ENCODE measurements at regions of chr6 and their contacts with region 1.

Region 1: GRCh38 chr6:90080876-90081481 is 186.7 kb downstream of the GJA10 start:
- DNase-seq: no peak
- ATAC-seq: peak; percentile 61
- H3K4me3 Mint-ChIP-seq: peak overlapping the region; percentile 84
- H3K27ac Mint-ChIP-seq: peak overlapping the region; percentile 86
- H3K4me1 Mint-ChIP-seq: peaks cover 96% of the 10 kb centered on the region
- H3K27me3 Mint-ChIP-seq: no peaks in the 10 kb centered on the region
- CTCF ChIP-seq: no peak

Region 2: GRCh38 chr6:89819336-89820130 is 261.4 kb before region 1 on chr6 and contains the start of gene MDN1:
- CTCF ChIA-PET with region 1: no interaction called
- POLR2A ChIA-PET with region 1: no interaction called
- intact Hi-C with region 1: loop called (anchors 10 kb)
- DNase-seq: peak; percentile 76
- ATAC-seq: peak; percentile 94
- H3K4me3 Mint-ChIP-seq: peak within 1 kb of the TSS; percentile 95
- H3K27ac Mint-ChIP-seq: peak within 1 kb of the TSS; percentile 95
- H3K4me1 Mint-ChIP-seq: peaks cover 33% of the 10 kb centered on the region
- H3K27me3 Mint-ChIP-seq: no peaks in the 10 kb centered on the region
- CTCF ChIP-seq: no peak
- total RNA-seq, gene MDN1: 59.8 and 65.4 TPM in 2 replicates

Region 3: GRCh38 chr6:90044833-90045381 is 36.1 kb before region 1 on chr6:
- CTCF ChIA-PET with region 1: no interaction called
- POLR2A ChIA-PET with region 1: no interaction called
- intact Hi-C with region 1: no loop called
- DNase-seq: no peak
- ATAC-seq: no peak
- H3K4me3 Mint-ChIP-seq: no peak overlapping the region
- H3K27ac Mint-ChIP-seq: peak overlapping the region; percentile 55
- H3K4me1 Mint-ChIP-seq: peaks cover 17% of the 10 kb centered on the region
- H3K27me3 Mint-ChIP-seq: no peaks in the 10 kb centered on the region
- CTCF ChIP-seq: no peak

Region 4: DNA sequence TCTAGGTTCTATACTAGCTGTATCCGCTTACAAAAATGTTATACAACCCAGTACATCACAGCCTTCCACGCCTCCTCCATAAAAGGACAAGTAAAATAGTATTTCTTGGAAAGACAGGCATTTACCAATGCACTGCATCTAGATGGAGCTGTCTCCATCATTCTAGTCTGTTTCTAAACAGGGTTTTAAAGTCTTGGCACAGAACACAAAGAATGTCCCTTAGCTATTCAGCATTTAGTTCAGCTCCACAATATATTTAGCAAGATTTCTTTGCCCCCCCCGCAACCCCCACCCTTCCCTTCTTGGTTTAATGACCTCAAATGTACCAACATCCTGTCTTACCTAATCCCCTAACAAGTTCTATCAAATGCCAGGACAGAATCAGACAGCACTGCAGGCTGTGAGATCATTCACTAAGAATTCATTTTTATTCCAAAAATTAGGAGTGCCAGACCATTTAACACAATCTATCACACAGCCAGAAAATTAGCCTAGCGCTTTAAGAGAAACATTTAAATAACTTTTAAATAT is 17.1 kb after region 1 on chr6:
- CTCF ChIA-PET with region 1: no interaction called
- POLR2A ChIA-PET with region 1: interaction called, 10 read pairs
- intact Hi-C with region 1: loop called (anchors 1 kb)
- DNase-seq: no peak
- ATAC-seq: no peak
- H3K4me3 Mint-ChIP-seq: peak overlapping the region; percentile 2
- H3K27ac Mint-ChIP-seq: peak overlapping the region; percentile 72
- H3K4me1 Mint-ChIP-seq: peaks cover 98% of the 10 kb centered on the region
- H3K27me3 Mint-ChIP-seq: no peaks in the 10 kb centered on the region
- CTCF ChIP-seq: no peak

Region 5: DNA sequence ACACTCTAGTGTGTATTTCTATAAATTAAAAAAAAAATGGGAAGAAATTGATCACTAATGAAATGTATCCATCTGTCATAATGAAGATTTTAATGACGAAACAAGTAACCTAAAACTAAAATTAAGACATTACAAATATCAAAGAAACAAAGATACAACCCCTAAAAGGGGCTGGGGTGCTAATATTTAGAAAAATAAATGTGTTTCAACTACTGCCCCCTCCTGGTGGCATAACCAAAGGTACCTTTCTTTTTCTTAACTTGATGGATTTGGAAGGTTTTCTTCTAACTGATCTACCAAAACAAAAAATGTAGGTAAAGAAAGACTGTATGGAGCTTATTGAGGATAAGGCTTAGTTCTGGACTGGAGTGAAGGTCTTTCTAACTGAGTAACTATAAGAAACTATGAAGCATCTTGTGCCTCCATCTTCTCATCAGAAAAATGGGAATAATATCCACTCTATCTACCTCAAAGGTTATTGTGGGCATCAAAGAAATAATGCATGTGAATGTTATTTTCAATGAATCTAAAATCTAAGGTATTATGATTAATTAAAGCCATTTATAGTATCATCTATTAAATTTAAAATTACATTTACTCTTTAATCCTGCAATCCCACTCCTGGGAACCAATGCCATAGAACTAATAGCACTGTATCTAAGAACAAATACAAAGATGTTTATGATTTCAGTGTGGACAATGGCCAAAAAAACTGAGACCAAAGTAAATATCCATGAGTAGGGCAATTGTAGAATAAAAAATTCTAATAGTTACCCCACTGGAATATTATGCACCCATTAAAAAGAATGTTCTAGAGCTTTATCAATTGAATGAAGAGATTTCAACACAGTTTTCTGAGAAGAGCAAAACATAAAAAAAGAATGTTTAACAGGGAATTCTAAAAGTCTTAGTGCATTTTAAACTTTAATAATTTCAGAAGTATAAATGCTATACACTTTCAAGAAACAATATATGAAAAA is 98.5 kb after region 1 on chr6:
- CTCF ChIA-PET with region 1: interaction called, 14 read pairs
- POLR2A ChIA-PET with region 1: interaction called, 32 read pairs
- intact Hi-C with region 1: loop called (anchors 1 kb)
- DNase-seq: no peak
- ATAC-seq: no peak
- H3K4me3 Mint-ChIP-seq: peak overlapping the region; percentile 77
- H3K27ac Mint-ChIP-seq: peak overlapping the region; percentile 92
- H3K4me1 Mint-ChIP-seq: peaks cover 79% of the 10 kb centered on the region
- H3K27me3 Mint-ChIP-seq: no peaks in the 10 kb centered on the region
- CTCF ChIP-seq: no peak

Region 6: GRCh38 chr6:90375681-90376439 is 294.9 kb after region 1 on chr6:
- CTCF ChIA-PET with region 1: no interaction called
- POLR2A ChIA-PET with region 1: no interaction called
- intact Hi-C with region 1: loop called (anchors 5 kb)
- DNase-seq: peak; percentile 43
- ATAC-seq: peak; percentile 95
- H3K4me3 Mint-ChIP-seq: peak overlapping the region; percentile 50
- H3K27ac Mint-ChIP-seq: peak overlapping the region; percentile 94
- H3K4me1 Mint-ChIP-seq: peaks cover 72% of the 10 kb centered on the region
- H3K27me3 Mint-ChIP-seq: no peaks in the 10 kb centered on the region
- CTCF ChIP-seq: no peak

Region 7: GRCh38 chr6:90478789-90479602 is 398.0 kb after region 1 on chr6:
- CTCF ChIA-PET with region 1: interaction called, 4 read pairs
- POLR2A ChIA-PET with region 1: no interaction called
- intact Hi-C with region 1: loop called (anchors 5 kb)
- DNase-seq: peak; percentile 54
- ATAC-seq: peak; percentile 96
- H3K4me3 Mint-ChIP-seq: no peak overlapping the region
- H3K27ac Mint-ChIP-seq: peak overlapping the region; percentile 64
- H3K4me1 Mint-ChIP-seq: peaks cover 22% of the 10 kb centered on the region
- H3K27me3 Mint-ChIP-seq: no peaks in the 10 kb centered on the region
- CTCF ChIP-seq: peak; percentile 95

Measured in activated B cell treated with CpG ODN at 0.5 μM for 24 hours (primary cell).